ENCODE measurements at regions of chr15 and their contacts with region 1.

Region 1: GRCh38 chr15:67199881-67200763 is 54.3 kb downstream of the AAGAB start:
- DNase-seq: no peak
- H3K4me3 ChIP-seq: no peak overlapping the region
- H3K27ac ChIP-seq: no peak overlapping the region
- H3K4me1 ChIP-seq: peaks cover 7% of the 10 kb centered on the region; the same call in 1 of the 2 replicates
- H3K27me3 ChIP-seq: no peaks in the 10 kb centered on the region
- CTCF ChIP-seq: no peak

Region 2: DNA sequence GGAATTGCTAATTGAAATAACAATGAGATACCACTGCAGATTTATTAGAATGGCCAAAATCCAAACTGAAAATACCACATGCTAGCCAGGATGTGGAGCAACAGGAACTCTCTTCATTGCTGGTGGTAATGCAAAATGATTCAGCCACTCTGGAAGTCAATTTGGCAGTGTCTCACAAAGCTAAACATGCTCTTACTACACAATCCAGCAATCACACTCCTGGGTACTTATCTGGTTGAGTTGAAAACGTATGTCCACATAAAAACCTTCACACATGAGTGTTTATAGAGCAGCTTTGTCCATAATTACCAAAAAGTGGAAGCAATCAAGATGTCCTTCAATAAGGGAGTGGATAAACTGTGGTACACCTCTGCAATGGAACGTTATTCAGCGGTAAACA is 384.8 kb before region 1 on chr15:
- CTCF ChIA-PET with region 1: no interaction called
- POLR2A ChIA-PET with region 1: no interaction called
- intact Hi-C with region 1: no loop called
- DNase-seq: no peak
- H3K4me3 ChIP-seq: no peak overlapping the region
- H3K27ac ChIP-seq: no peak overlapping the region
- H3K4me1 ChIP-seq: peaks cover 36% of the 10 kb centered on the region
- H3K27me3 ChIP-seq: no peaks in the 10 kb centered on the region
- CTCF ChIP-seq: no peak

Region 3: GRCh38 chr15:67127965-67128364 is 72.2 kb before region 1 on chr15:
- CTCF ChIA-PET with region 1: no interaction called
- POLR2A ChIA-PET with region 1: interaction called, 22 read pairs
- intact Hi-C with region 1: no loop called
- DNase-seq: peak; percentile 48 to 75
- H3K4me3 ChIP-seq: peak overlapping the region; percentile 43; the same call in 1 of the 2 replicates
- H3K27ac ChIP-seq: peak overlapping the region; percentile 98
- H3K4me1 ChIP-seq: peaks cover 83% of the 10 kb centered on the region
- H3K27me3 ChIP-seq: no peaks in the 10 kb centered on the region
- CTCF ChIP-seq: no peak

Region 4: GRCh38 chr15:67146875-67147381 is 53.2 kb before region 1 on chr15:
- CTCF ChIA-PET with region 1: no interaction called
- POLR2A ChIA-PET with region 1: no interaction called
- intact Hi-C with region 1: no loop called
- DNase-seq: peak; percentile 67 to 87
- H3K4me3 ChIP-seq: peak overlapping the region; percentile 7; the same call in 1 of the 2 replicates
- H3K27ac ChIP-seq: peak overlapping the region; percentile 96
- H3K4me1 ChIP-seq: peaks cover 90% of the 10 kb centered on the region
- H3K27me3 ChIP-seq: no peaks in the 10 kb centered on the region
- CTCF ChIP-seq: no peak

Region 5: GRCh38 chr15:67254238-67255175 is 54.4 kb after region 1 on chr15 and contains the starts of genes AAGAB and IQCH:
- CTCF ChIA-PET with region 1: interaction called, 13 read pairs
- POLR2A ChIA-PET with region 1: no interaction called
- intact Hi-C with region 1: no loop called
- DNase-seq: peak; percentile 88 to 99
- H3K4me3 ChIP-seq: peak within 1 kb of the TSS; percentile 99
- H3K27ac ChIP-seq: peak within 1 kb of the TSS; percentile 86
- H3K4me1 ChIP-seq: peaks cover 14% of the 10 kb centered on the region
- H3K27me3 ChIP-seq: no peaks in the 10 kb centered on the region
- CTCF ChIP-seq: no peak
- total RNA-seq, gene AAGAB: 42.2 and 56.5 TPM in 2 replicates
- total RNA-seq, gene IQCH: 7.5 and 8.6 TPM in 2 replicates

Region 6: DNA sequence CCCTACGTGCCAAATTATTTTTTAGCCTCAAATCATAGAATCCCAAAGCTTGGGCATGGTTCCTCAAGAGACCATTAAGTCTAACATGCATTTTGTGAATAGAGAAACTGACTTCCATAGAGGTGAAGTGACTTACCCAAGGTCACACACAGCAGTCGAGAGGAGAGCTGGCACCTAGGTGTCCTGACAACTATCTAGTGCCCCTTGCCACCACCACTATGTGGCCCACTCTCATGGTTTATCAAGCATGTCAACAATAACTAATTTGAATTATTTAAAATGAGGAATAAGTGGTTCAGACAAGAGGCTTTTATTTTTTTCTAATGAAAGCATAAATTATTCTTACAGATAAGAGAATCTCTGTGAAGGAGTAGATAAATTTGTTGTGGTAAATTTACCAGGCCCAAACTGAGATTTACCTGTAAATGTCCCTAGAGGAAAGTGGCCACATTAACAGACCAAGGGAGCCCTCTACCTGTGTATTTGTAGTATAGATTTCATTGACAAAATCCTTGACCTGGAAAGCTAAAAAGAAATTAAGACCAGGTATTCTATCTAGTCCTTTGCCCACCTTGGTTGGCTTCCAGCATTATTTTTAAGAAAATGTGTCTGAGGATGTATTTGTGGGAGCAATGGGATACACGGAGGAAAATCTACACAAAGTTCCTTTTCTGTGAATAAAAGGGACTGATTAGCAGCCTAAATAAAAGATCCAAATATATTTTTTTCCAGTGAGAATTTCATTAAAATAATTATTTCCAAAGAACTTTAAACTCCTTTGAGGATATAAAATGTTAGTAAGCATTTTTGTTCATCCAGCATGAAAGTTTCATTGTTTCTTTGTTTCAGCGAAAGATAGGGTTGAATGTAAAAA is 103.6 kb after region 1 on chr15:
- CTCF ChIA-PET with region 1: no interaction called
- POLR2A ChIA-PET with region 1: no interaction called
- intact Hi-C with region 1: loop called (anchors 5 kb)
- DNase-seq: no peak
- H3K4me3 ChIP-seq: no peak overlapping the region
- H3K27ac ChIP-seq: no peak overlapping the region
- H3K4me1 ChIP-seq: no peaks in the 10 kb centered on the region
- H3K27me3 ChIP-seq: no peaks in the 10 kb centered on the region
- CTCF ChIP-seq: peak; percentile 66

Region 7: DNA sequence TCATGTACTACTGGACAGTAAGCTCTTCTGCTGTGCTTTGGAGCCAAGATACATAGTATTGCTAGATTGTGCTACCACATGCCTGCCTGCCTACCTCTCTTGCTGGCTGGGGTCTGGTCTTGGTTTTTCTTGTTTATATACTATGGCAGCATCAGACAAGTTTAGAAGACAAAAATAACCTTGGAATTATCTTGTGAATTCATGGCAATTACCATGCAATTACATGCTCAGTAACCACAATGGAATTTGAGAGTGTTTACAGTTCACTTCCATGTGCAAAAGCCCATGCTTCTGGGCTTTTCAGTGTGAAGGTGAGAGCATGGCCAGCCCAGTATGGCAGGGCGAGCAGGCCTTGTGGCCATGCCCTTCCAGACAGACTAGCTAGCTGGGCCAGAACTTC is 272.8 kb after region 1 on chr15:
- CTCF ChIA-PET with region 1: no interaction called
- POLR2A ChIA-PET with region 1: no interaction called
- intact Hi-C with region 1: no loop called
- DNase-seq: no peak
- H3K4me3 ChIP-seq: no peak overlapping the region
- H3K27ac ChIP-seq: no peak overlapping the region
- H3K4me1 ChIP-seq: no peaks in the 10 kb centered on the region
- H3K27me3 ChIP-seq: no peaks in the 10 kb centered on the region
- CTCF ChIP-seq: no peak